Lower leg skin (tissue), 4 donors: ENCODE measurements at regions of chr16 and their contacts with region 1.

Region 1: DNA sequence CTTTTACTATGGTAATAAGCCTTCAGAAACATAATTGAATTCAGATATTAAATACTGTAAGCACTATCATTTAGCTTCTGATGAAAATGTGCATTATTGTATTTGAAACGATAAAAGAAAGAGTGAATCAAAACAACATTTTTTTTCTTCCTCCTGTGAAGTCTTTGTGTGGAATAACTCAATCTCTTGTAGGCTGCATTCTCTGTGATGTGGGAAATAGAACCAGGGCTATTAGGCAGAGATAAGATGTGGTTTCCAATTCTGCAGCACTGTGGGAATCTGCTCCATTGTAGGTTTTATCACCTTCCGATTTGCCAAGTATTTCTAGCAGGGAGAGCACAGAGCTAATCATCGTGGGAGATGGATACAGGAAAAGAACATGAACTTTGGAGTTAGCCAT is 624.5 kb downstream of the RBFOX1 start:
- DNase-seq: no peak
- H3K4me3 ChIP-seq: no peak overlapping the region
- CTCF ChIP-seq: no peak
- POLR2A ChIP-seq: no peak

Region 2: GRCh38 chr16:7998789-7999453 is 41.8 kb after region 1 on chr16:
- intact Hi-C with region 1: loop called (anchors 1 kb)
- DNase-seq: no peak
- H3K4me3 ChIP-seq: no peak overlapping the region
- CTCF ChIP-seq: no peak
- POLR2A ChIP-seq: no peak